GM13976 (cell line): ENCODE measurements at regions of chr1 and their contacts with region 1.

Region 1: DNA sequence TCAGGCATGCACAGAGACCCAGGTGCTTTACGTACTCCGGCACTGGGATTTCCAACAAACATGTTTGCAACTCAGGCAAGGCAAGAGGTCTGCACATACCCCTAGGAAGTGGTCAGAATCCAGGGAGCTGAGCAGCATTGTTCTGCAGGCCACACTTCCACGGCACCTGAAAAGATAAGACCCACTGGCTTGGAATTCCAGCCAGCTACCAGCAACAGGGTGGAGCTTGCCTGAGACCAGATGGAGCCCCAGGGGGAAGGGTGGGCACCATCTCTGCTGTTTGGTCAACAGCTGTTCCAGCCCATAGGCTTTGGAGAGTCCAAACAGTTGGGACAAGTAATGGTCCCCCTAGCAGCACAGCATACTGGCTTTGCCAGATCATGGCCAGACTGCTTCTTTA is 51.7 kb upstream of the LRRC8B start:
- DNase-seq: no peak
- CTCF ChIP-seq: no peak

Region 2: GRCh38 chr1:89605692-89606091 is 132.7 kb after region 1 on chr1:
- in situ Hi-C with region 1: loop called (anchors 10 kb)
- DNase-seq: no peak
- CTCF ChIP-seq: no peak